HepG2 (cell line): ENCODE measurements at regions of chr5 and their contacts with region 1.

Region 1: DNA sequence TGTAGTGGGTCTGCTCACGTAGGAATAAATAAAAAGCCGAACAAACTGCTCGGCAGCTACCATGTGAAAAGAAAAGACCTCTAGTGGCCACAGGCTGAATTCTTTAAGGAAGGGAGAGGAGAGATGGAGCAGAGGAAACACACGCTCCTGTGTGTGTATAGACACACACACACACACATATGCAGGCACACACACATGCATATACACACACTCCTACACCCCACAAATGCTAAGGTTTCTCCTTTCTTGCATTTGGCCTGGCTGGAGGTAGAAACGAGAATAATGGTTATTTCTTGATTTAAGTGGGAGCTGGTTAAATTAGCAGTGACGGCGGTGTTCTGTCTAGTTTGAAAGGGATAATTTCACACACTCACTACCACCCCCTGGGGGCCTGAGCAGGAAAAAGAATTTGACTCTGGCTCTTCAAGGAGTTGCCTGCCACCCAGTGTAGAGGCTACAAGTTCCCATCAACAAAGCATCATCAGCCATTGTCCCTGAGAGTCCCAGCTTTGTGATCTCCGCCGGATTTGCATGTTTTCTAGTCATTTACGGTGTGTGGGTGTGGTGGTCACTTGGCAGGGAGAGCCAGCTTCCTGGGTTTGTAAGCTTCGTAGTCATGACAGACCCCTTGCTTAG is at the start of gene INSYN2B:
- DNase-seq: peak; percentile 39
- ATAC-seq: peak; percentile 97
- H3K4me3 ChIP-seq: no peak within 1 kb of the TSS
- H3K27ac ChIP-seq: no peak within 1 kb of the TSS
- H3K4me1 ChIP-seq: no peaks in the 10 kb centered on the region
- H3K27me3 ChIP-seq: no peaks in the 10 kb centered on the region; a peak in 1 of 5 replicates
- CTCF ChIP-seq: peak; percentile 42
- EP300 ChIP-seq: no peak
- POLR2A ChIP-seq: no peak
- RAD21 ChIP-seq: no peak
- total RNA-seq, gene INSYN2B: not detected in 2 replicates

Region 2: DNA sequence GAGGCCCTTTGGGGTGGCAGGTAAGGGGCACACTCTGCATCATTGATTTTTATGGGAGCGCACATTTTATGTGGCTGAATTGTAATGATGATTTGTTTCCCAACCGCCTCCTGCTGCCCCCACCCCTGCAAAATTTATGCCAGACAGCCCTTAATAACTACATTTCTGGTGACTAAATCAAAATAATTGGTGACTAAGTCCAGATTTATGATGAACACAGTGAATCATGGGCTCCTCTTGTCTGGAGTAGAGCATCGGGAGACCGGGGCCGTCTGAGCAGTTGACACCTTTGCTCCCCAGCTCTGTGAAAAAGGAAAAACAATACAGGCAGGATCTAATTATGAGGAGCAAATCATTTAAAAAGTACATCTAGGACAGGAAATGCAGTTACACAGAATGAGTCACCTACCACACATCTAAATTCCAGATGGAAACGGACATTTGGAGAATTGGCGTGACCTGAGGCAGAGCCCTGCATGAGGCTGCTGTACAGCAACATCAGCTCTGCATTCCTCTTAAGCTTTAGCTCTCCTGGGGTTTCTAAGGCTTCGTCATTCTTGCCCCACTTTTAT is 284.5 kb before region 1 on chr5:
- CTCF ChIA-PET with region 1: no interaction called
- POLR2A ChIA-PET with region 1: no interaction called
- in situ Hi-C with region 1: loop called (anchors 5 kb)
- intact Hi-C with region 1: no loop called
- DNase-seq: no peak
- ATAC-seq: no peak
- H3K4me3 ChIP-seq: no peak overlapping the region
- H3K27ac ChIP-seq: no peak overlapping the region
- H3K4me1 ChIP-seq: no peaks in the 10 kb centered on the region
- H3K27me3 ChIP-seq: peaks cover 0 to 4% of the 10 kb centered on the region in 2 experiments; a peak in 2 of 5 replicates
- CTCF ChIP-seq: no peak
- EP300 ChIP-seq: no peak
- POLR2A ChIP-seq: no peak
- RAD21 ChIP-seq: no peak

Region 3: GRCh38 chr5:169701910-169702451 is 278.6 kb before region 1 on chr5:
- CTCF ChIA-PET with region 1: interaction called, 3 read pairs
- POLR2A ChIA-PET with region 1: no interaction called
- in situ Hi-C with region 1: loop called (anchors 5 kb)
- intact Hi-C with region 1: loop called (anchors 2 kb)
- DNase-seq: no peak
- ATAC-seq: peak; percentile 44; the same call in 1 of the 3 replicates
- H3K4me3 ChIP-seq: no peak overlapping the region
- H3K27ac ChIP-seq: no peak overlapping the region
- H3K4me1 ChIP-seq: no peaks in the 10 kb centered on the region
- H3K27me3 ChIP-seq: no peaks in the 10 kb centered on the region; a peak in 1 of 5 replicates
- CTCF ChIP-seq: peak; percentile 36; the same call in 1 of the 2 replicates
- EP300 ChIP-seq: no peak
- POLR2A ChIP-seq: no peak
- RAD21 ChIP-seq: no peak